Caco-2 (cell line): ENCODE measurements at regions of chr16 and their contacts with region 1.

Region 1: DNA sequence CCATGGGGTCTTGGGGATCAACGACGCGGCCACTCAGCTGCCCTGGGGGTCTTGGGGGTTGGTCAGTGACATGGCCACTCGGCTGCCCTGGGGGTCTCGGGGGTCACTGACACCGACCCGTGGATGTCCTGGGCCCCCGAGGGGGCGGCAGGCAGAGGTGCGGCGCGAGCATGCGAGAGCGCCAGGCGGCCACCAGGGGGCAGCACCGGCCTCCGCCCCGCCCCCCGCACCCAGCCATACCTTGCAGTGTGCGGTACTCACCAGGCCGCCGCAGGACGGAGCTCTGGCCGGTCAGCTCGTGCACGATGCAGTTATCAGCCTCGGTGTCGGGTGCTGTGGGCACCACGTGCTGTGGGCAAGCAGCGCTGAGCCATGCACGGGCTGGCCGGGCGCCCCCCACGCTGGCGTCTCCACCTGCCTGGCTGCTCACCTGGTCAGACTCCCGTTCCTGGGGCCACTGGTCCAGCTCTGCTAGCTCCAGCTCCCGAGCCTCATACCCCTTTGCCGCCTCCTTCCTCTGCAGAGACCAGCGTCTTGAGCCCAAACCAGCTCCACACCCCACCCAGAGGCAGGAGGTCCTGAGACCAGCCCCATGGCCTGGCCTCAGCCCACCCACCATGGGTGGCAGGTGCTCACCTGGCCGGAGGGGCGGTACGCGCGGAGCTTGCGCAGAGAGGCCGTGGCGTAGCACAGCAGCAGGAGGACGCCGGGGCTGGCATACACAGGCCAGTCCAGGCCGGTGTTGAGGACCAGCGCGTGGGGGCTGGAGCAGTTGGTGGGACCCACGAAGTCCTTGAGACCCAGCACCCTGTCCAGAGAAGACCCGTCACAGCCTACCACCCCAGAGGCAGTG is 31.2 kb downstream of the CTU2 start:
- DNase-seq: peak; percentile 75 to 82
- H3K4me3 ChIP-seq: no peak overlapping the region
- H3K4me3 Mint-ChIP-seq: no peak overlapping the region
- H3K27ac Mint-ChIP-seq: no peak overlapping the region
- H3K4me1 ChIP-seq: no peaks in the 10 kb centered on the region
- H3K4me1 Mint-ChIP-seq: no peaks in the 10 kb centered on the region
- H3K27me3 ChIP-seq: no peaks in the 10 kb centered on the region
- H3K27me3 Mint-ChIP-seq: no peaks in the 10 kb centered on the region
- CTCF ChIP-seq: peak; percentile 93 to 97

Region 2: GRCh38 chr16:88357306-88358022 is 380.1 kb before region 1 on chr16:
- CTCF ChIA-PET with region 1: no interaction called
- POLR2A ChIA-PET with region 1: no interaction called
- intact Hi-C with region 1: no loop called
- DNase-seq: no peak
- H3K4me3 ChIP-seq: no peak overlapping the region
- H3K4me3 Mint-ChIP-seq: no peak overlapping the region
- H3K27ac Mint-ChIP-seq: no peak overlapping the region
- H3K4me1 ChIP-seq: no peaks in the 10 kb centered on the region
- H3K4me1 Mint-ChIP-seq: no peaks in the 10 kb centered on the region
- H3K27me3 ChIP-seq: no peaks in the 10 kb centered on the region
- H3K27me3 Mint-ChIP-seq: peaks cover 5% of the 10 kb centered on the region
- CTCF ChIP-seq: no peak

Region 3: DNA sequence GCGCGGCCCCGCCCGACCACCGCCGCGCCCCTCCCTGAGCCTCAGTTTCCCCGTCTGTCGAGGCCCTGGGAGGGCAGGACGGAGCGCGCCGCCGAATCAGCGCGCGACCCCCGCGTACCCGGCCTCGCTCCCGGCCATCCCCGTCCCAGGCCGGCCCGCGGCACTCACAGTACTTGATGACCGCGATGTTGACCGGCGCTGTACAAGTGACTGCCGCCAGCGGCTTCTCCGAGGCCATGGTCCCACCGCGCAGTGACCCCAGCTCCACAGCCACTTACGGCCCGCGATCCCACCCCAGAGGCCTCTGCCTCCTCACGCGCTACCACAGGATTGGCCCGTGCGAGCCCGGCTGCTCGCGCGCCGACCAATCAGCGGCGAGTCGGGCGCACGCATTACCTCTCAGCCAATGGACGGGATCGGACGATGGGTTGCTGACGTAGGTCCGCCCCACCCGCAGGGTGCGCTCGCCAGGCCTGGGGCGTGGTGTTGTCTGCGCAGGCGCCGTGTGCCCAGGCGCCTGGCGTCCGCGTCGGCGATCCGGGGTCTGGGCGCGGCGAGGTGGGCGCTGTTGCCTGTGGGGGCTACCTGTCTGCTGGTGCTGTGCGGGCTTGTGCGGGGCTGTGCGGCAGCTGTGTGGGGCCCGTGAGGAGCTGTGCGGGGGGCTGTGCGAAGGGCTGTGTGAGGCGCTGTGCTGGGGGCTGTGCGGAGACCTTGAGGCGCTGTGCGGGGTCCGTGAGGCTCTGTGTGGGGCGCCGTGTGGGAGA is 74.5 kb before region 1 on chr16 and contains the start of gene MVD:
- CTCF ChIA-PET with region 1: interaction called, 13 read pairs
- POLR2A ChIA-PET with region 1: no interaction called
- intact Hi-C with region 1: no loop called
- DNase-seq: peak; percentile 99
- H3K4me3 ChIP-seq: peak within 1 kb of the TSS; percentile 84
- H3K4me3 Mint-ChIP-seq: peak within 1 kb of the TSS; percentile 94
- H3K27ac Mint-ChIP-seq: peak within 1 kb of the TSS; percentile 88
- H3K4me1 ChIP-seq: peaks cover 11% of the 10 kb centered on the region
- H3K4me1 Mint-ChIP-seq: peaks cover 5% of the 10 kb centered on the region
- H3K27me3 ChIP-seq: no peaks in the 10 kb centered on the region
- H3K27me3 Mint-ChIP-seq: no peaks in the 10 kb centered on the region
- CTCF ChIP-seq: peak in 1 of 2 experiments; percentile 18
- total RNA-seq, gene MVD: 127 and 141 TPM in 2 replicates

Region 4: DNA sequence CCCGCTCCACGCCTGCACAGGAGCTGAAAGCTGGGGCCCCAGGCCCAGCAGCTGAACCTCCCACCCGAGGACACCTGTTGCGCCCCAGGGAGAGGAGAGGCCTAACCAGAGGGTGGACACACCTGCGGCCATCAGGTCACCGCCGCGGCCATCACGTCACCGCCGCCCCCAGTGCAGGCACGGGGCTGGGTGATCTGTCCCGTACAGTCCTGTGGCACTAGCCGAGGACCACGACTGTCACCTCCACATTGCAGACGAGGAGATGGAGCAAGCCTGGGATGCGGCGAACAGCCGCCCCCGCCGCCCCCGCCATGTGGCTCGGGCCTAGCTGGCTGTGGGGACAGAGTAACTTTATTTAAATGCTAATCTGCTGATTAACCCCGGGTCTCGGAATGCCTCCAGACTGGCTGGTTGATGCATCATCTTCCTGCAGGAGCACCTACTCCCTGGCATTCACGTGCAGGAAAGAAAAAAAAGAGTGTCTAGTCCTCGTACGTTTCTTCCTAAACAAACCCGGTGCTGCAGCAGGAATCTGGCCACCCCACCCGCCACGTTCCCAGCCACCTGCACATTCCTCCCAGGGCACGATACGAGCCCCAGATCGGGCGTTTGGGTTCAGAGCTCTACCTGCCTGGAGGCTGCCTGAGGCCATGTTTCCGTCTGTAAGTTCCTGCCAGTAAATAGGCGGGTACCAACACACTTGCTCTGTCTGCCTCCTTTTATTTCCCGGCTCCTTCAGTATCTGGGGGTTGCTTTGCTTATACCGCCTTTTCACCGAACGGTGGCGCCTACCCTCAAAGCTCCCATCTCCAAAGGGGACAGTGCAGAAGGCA is 17.6 kb after region 1 on chr16:
- CTCF ChIA-PET with region 1: interaction called, 30 read pairs
- POLR2A ChIA-PET with region 1: no interaction called
- intact Hi-C with region 1: no loop called
- DNase-seq: no peak
- H3K4me3 ChIP-seq: no peak overlapping the region
- H3K4me3 Mint-ChIP-seq: no peak overlapping the region
- H3K27ac Mint-ChIP-seq: no peak overlapping the region
- H3K4me1 ChIP-seq: no peaks in the 10 kb centered on the region
- H3K4me1 Mint-ChIP-seq: no peaks in the 10 kb centered on the region
- H3K27me3 ChIP-seq: no peaks in the 10 kb centered on the region
- H3K27me3 Mint-ChIP-seq: no peaks in the 10 kb centered on the region
- CTCF ChIP-seq: no peak

Region 5: DNA sequence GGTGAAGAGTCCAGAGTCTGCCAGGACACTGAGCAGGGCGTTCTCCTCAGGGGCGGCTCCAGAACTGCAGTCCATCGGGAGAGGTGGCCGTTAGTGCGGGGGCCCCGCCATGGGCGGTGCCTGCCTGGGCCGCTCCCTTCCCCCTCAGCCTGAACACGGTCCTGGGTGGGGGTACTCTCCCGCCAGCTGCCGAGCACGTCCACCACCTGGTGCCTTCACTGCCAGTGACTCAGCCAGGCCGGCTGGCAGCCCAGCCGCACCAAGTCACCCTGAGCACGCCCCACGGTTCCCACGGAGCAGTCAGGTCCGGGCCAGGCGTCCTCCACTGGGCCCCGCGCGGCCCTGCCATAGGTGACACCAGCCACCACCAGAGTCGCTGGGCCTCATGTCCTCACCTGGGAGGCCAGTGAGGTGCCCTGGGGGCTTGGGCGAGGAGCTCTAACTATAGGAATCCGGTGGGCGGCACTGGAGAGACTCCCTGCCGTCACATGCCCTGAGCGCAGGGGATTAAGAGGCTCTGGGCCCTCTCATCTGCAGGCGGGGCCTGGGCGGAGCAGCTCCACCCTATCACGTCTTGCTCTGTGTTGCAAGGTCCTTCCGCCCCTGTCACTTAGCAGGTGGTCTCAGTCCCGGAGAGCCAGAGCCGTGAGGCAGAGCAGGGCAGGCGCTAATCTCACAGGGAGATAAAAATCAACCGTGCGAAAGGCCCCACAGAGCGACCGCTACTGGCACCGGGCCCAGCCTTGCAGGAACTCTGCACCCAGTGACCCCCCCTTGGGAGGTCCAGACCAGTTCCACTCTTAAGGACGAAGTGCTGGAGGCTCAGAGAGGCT is 33.2 kb after region 1 on chr16:
- CTCF ChIA-PET with region 1: interaction called, 20 read pairs
- POLR2A ChIA-PET with region 1: interaction called, 7 read pairs
- intact Hi-C with region 1: no loop called
- DNase-seq: peak; percentile 83 to 85
- H3K4me3 ChIP-seq: no peak overlapping the region
- H3K4me3 Mint-ChIP-seq: peak overlapping the region; percentile 27
- H3K27ac Mint-ChIP-seq: peak overlapping the region; percentile 88
- H3K4me1 ChIP-seq: peaks cover 85% of the 10 kb centered on the region
- H3K4me1 Mint-ChIP-seq: peaks cover 41% of the 10 kb centered on the region
- H3K27me3 ChIP-seq: no peaks in the 10 kb centered on the region
- H3K27me3 Mint-ChIP-seq: no peaks in the 10 kb centered on the region
- CTCF ChIP-seq: no peak

Region 6: GRCh38 chr16:88791755-88792550 is 54.4 kb after region 1 on chr16:
- CTCF ChIA-PET with region 1: interaction called, 21 read pairs
- POLR2A ChIA-PET with region 1: no interaction called
- intact Hi-C with region 1: no loop called
- DNase-seq: peak in 1 of 2 experiments; percentile 4
- H3K4me3 ChIP-seq: no peak overlapping the region
- H3K4me3 Mint-ChIP-seq: no peak overlapping the region
- H3K27ac Mint-ChIP-seq: no peak overlapping the region
- H3K4me1 ChIP-seq: peaks cover 8% of the 10 kb centered on the region
- H3K4me1 Mint-ChIP-seq: no peaks in the 10 kb centered on the region
- H3K27me3 ChIP-seq: no peaks in the 10 kb centered on the region
- H3K27me3 Mint-ChIP-seq: no peaks in the 10 kb centered on the region
- CTCF ChIP-seq: no peak

Region 7: GRCh38 chr16:88811769-88812512 is 74.4 kb after region 1 on chr16 and contains the start of gene APRT:
- CTCF ChIA-PET with region 1: interaction called, 29 read pairs
- POLR2A ChIA-PET with region 1: interaction called, 3 read pairs
- intact Hi-C with region 1: no loop called
- DNase-seq: peak; percentile 97 to 99
- H3K4me3 ChIP-seq: peak within 1 kb of the TSS; percentile 96
- H3K4me3 Mint-ChIP-seq: peak within 1 kb of the TSS; percentile 97
- H3K27ac Mint-ChIP-seq: peak within 1 kb of the TSS; percentile 98
- H3K4me1 ChIP-seq: peaks cover 15% of the 10 kb centered on the region
- H3K4me1 Mint-ChIP-seq: no peaks in the 10 kb centered on the region
- H3K27me3 ChIP-seq: no peaks in the 10 kb centered on the region
- H3K27me3 Mint-ChIP-seq: no peaks in the 10 kb centered on the region
- CTCF ChIP-seq: peak in 1 of 2 experiments; percentile 19
- total RNA-seq, gene APRT: 251 and 268 TPM in 2 replicates